ENCODE measurements at regions of chr12 and their contacts with region 1.

Region 1: DNA sequence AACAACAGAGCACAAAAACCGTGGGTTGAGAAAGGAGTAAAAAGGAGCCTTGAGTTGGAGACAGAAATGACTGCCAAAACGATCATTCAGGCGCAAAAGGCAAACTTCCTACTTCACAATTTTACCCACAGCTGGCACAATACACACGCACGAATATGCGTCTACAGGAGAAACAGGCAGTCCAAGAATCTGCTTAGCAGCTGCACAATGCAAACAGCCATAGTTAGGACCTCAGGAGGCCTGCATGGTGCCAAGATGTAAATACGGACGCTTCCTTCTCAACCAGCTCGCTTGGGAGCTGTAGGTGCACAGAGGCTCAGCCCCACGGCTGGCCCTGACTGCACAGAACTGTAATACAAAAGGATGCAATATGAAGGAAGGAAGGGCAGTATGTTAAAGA is 250.1 kb upstream of the CAND1 start:
- DNase-seq: no peak
- H3K27ac ChIP-seq: no peak overlapping the region
- CTCF ChIP-seq: no peak

Region 2: GRCh38 chr12:66688846-66689439 is 330.1 kb before region 1 on chr12:
- CTCF ChIA-PET with region 1: no interaction called
- POLR2A ChIA-PET with region 1: no interaction called
- DNase-seq: peak; percentile 57
- H3K27ac ChIP-seq: no peak overlapping the region
- CTCF ChIP-seq: peak; percentile 51

Region 3: GRCh38 chr12:67034492-67034891 is 15.4 kb after region 1 on chr12:
- CTCF ChIA-PET with region 1: no interaction called
- POLR2A ChIA-PET with region 1: no interaction called
- DNase-seq: peak; percentile 20
- H3K27ac ChIP-seq: no peak overlapping the region
- CTCF ChIP-seq: no peak

Region 4: DNA sequence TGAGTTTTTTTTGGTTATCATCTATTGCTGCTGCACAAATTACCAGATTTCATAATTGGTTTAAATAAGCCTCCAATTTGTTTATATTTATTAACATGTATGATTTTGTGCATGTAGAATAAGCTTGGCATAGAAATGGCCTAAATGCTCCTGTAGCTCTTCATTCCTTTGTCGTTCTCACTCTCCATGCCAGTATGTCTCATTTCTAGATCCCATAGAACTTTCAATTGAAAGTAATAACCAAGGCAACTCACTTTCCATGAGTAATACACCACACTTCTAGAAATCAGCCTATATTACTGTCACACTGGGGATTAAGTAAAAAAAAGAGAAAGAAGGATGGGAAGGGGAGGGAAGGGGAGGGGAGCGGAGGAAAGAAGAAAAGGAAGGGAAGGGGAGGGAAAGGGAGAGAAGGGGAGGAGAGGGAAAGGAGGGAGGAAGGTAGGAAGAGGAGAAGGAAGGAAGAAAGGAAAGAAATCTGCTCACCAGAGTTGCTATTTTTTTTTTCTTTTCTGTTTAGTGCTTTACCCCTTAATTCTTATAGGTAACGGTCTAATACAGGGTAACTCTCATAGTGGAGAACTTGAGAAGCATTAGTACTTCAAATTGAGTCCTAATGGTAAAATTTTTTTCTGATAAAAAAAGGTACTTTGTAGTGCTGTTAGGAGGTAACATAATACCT is 1834.5 kb after region 1 on chr12:
- CTCF ChIA-PET with region 1: no interaction called
- POLR2A ChIA-PET with region 1: interaction called, 11 read pairs
- DNase-seq: no peak
- H3K27ac ChIP-seq: no peak overlapping the region
- CTCF ChIP-seq: no peak